ENCODE measurements at regions of chr3 and their contacts with region 1.

Region 1: DNA sequence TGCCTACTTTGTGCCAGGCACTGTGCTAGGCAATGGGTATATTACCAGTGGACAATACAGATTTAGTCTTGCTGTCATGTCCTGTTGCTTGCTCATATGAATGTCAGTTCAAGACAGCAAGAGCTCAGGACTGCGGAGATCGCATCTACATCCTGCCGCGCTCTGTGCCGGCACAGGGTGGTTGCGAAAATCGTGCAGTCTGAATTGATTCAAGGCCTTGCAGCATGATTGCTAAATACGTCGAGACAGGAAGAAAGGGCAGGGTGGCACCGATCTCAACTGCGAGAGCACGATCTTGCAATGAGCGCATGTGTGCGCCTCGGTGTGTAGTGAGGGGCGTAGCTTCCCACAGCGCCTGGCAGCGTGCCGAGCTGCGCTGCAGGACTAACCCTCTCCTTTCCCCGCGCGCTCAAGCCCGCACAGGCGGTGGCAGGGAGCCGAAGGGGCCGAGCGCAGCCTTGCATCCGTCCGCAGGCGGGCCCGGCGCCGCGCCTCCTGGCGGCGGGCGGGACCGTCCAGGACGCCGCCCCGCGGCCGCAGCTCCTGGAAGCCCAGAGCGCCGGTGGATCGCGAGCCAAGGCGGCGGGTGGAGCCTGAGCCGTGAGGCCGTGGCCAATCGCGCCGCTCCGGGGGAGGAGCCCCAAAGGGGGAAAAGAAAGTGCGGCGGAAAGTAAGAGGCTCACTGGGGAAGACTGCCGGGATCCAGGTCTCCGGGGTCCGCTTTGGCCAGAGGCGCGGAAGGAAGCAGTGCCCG is at the start of gene IL1RAP:
- DNase-seq: peak; percentile 95 to 97 (median 96)
- ATAC-seq: peak; percentile 99
- H3K4me3 ChIP-seq: peak within 1 kb of the TSS; percentile 83
- H3K27ac ChIP-seq: peak within 1 kb of the TSS; percentile 69
- H3K4me1 ChIP-seq: no peaks in the 10 kb centered on the region
- H3K27me3 ChIP-seq: no peaks in the 10 kb centered on the region
- total RNA-seq, gene IL1RAP: 3.7 to 8.5 (median 6.9) TPM

Region 2: DNA sequence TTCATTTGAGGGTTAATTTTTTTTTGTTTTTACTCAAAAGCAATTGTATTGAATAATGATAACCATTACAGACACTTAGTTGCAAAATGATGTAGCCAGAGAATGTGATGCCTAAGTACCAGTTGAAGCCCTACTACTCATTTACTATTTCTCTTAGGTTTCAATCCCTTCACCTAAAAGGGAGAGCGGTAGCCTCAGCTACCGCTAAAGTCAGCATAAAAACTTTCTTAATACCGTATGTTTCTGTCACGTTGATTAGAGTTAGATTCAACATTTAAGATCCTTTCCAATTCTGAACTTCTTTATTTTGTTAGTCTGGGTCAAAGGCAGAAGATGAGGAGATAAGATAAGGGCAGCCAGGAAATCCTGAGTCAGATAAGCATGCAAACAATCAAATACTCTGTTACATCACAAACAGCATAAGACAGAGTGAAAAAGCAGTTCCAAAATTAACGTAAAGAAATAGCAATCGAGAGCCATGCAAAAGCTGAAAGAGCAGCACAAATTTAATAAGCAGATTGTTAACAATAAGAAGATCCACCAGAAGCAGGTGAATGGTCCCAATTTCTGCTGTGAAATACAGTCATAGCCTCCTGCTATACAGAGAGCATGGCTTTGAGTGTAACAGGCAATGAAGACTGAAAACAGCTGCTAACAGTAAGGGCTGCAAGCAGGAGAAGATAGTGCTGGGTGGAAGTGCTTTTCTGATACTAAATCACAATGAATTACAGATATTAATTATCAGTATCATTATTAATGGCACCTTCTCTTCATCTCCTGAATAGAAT is 66.9 kb before region 1 on chr3:
- intact Hi-C with region 1: no loop called
- DNase-seq: no peak
- ATAC-seq: no peak
- H3K4me3 ChIP-seq: no peak overlapping the region
- H3K27ac ChIP-seq: no peak overlapping the region
- H3K4me1 ChIP-seq: no peaks in the 10 kb centered on the region
- H3K27me3 ChIP-seq: no peaks in the 10 kb centered on the region

Region 3: DNA sequence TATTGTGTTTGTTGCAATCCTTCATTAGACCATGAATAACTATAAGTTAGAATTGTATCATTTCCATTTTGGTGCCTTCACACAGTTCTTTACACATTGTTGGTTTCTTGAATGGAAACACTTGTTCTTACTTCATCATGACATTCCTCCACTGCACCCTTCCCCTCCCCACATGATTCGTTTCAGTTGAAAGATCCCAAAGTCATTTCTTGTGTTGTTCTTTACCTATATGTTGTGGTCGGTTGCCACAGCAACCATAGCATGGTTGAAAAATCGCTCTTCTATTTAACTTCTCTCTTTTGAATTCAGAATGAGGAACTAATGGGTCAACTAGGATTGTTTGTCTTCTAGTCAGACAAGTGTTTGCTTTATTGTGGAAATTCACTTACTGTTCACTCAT is 103.6 kb after region 1 on chr3:
- intact Hi-C with region 1: no loop called
- DNase-seq: peak in 1 of 3 donors; percentile 16
- ATAC-seq: peak in 1 of 2 donors; percentile 31
- H3K4me3 ChIP-seq: no peak overlapping the region
- H3K27ac ChIP-seq: no peak overlapping the region
- H3K4me1 ChIP-seq: no peaks in the 10 kb centered on the region
- H3K27me3 ChIP-seq: no peaks in the 10 kb centered on the region

Region 4: DNA sequence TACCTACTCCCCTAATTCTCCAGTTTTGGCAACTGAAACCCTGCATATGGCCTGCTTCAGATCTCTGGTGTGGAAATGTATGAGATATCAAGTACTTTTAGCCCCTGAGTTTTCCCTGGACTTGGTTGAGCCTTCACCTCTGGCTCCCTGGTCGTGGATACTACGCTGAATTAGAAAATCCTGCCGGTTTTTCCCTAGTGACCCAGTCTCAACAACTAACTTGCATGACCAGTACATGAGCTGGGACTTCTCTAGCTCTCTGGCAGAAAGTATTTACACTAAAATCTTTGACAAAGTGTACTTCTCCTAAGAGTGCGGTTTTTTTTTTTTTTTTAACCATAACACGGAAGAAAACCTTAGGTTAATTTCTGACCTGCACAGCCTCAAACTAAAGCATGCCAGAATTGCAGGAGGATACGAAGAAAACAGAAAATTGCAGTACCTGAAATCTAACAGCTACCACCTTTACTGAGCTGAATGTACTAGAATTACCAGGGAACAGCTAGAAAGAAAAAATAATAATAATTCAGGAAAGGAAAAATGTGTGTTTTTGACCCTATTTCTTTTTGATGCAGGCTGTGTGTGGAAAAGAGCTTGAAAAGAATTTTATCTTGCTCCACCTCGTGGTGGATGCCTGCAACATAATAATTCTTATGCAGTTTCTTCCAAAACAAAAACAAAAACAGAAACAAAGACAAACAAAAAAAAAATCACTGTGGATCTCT is 183.4 kb after region 1 on chr3:
- intact Hi-C with region 1: loop called in 1 of 4 experiments (anchors 5 kb)
- DNase-seq: no peak
- ATAC-seq: no peak
- H3K4me3 ChIP-seq: no peak overlapping the region
- H3K27ac ChIP-seq: no peak overlapping the region
- H3K4me1 ChIP-seq: no peaks in the 10 kb centered on the region
- H3K27me3 ChIP-seq: no peaks in the 10 kb centered on the region

Measured in right cardiac atrium (tissue), 5 donors.